BJ (cell line): ENCODE measurements at regions of chr12 and their contacts with region 1.

Region 1: GRCh38 chr12:26122681-26123481 is 2.0 kb downstream of the BHLHE41 start:
- DNase-seq: no peak
- H3K4me3 ChIP-seq: peak overlapping the region; percentile 56
- H3K27me3 ChIP-seq: no peaks in the 10 kb centered on the region
- CTCF ChIP-seq: peak; percentile 44

Region 2: GRCh38 chr12:26153421-26154154 is 30.7 kb after region 1 on chr12:
- CTCF ChIA-PET with region 1: interaction called, 17 read pairs
- POLR2A ChIA-PET with region 1: interaction called, 8 read pairs
- DNase-seq: peak; percentile 91
- H3K4me3 ChIP-seq: no peak overlapping the region
- H3K27me3 ChIP-seq: no peaks in the 10 kb centered on the region
- CTCF ChIP-seq: peak; percentile 49